ENCODE measurements at regions of chr2 and their contacts with region 1.

Region 1: GRCh38 chr2:177263451-177264208 is 897 bp downstream of the NFE2L2 start:
- DNase-seq: peak; percentile 99
- ATAC-seq: peak; percentile 79

Region 2: GRCh38 chr2:177212106-177212890 is 51.3 kb before region 1 on chr2 and contains the start of gene HNRNPA3:
- intact Hi-C with region 1: loop called (anchors 1 kb)
- DNase-seq: peak; percentile 100
- ATAC-seq: peak; percentile 95
- total RNA-seq, gene HNRNPA3: 64.5 TPM